Dorsolateral prefrontal cortex (tissue), 120 donors: ENCODE measurements at regions of chr6 and their contacts with region 1.

Region 1: DNA sequence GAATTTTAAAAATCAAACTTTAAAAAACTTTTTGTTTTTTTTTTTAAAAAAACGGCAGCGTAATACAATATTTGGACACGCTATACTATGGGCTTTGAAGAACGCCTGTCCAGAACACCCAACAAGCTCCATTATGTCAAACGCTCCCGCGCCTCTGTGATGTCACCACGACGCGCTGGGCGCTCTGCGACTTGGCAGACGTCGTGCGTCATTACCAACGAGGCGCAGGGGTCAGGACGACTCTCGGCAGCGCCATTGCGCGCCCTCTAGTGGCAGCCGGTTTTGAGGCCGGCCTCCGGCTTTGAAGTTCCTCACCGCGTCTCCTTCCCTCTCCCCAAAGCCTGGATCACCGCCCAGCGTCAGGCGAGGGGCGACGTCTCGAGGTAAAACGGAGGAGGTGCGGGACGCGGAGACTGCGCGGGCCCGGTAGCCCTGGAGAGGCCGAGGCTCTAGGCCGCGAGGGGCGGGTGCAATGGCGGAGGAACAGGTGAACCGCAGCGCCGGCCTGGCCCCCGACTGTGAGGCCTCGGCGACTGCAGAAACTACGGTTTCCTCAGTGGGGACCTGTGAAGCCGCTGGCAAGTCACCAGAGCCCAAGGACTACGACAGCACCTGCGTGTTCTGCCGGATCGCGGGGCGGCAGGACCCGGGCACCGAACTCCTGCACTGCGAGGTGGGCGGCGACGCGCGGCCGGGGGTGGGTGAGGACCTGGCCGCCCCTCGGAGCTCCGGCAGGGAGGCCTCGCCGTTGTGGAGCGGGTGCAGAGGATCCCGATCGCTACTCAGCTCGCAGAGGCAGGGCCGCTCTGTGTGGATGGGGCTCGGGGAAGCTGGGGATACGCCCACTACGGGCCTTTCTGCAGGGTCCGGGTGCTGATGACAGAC is at the start of gene HINT3:
- DNase-seq: peak; percentile 96 to 98 (median 98)
- H3K4me3 ChIP-seq: peak within 1 kb of the TSS; percentile 67 to 100 (median 95)
- H3K27ac ChIP-seq: peak within 1 kb of the TSS; percentile 93 to 100 (median 99)
- H3K27me3 ChIP-seq: no peaks in the 10 kb centered on the region
- CTCF ChIP-seq: peak; percentile 94 to 100 (median 98)
- total RNA-seq, gene HINT3: 33.6 to 54.2 (median 42.3) TPM

Region 2: GRCh38 chr6:125858427-125859320 is 98.1 kb before region 1 on chr6:
- intact Hi-C with region 1: loop called in 1 of 2 experiments (anchors 5 kb)
- DNase-seq: peak in 8 of 10 donors; percentile 45 to 74 (median 56)
- H3K4me3 ChIP-seq: no peak overlapping the region
- H3K27ac ChIP-seq: peak overlapping the region in 55 of 59 donors; percentile 4 to 99 (median 73)
- H3K27me3 ChIP-seq: no peaks in the 10 kb centered on the region
- CTCF ChIP-seq: peak; percentile 40 to 88 (median 71)

Region 3: GRCh38 chr6:125867483-125867935 is 89.2 kb before region 1 on chr6:
- intact Hi-C with region 1: loop called (anchors 5 kb)
- DNase-seq: no peak
- H3K4me3 ChIP-seq: no peak overlapping the region
- H3K27ac ChIP-seq: peak overlapping the region; percentile 73 to 99 (median 94)
- H3K27me3 ChIP-seq: no peaks in the 10 kb centered on the region
- CTCF ChIP-seq: no peak

Region 4: DNA sequence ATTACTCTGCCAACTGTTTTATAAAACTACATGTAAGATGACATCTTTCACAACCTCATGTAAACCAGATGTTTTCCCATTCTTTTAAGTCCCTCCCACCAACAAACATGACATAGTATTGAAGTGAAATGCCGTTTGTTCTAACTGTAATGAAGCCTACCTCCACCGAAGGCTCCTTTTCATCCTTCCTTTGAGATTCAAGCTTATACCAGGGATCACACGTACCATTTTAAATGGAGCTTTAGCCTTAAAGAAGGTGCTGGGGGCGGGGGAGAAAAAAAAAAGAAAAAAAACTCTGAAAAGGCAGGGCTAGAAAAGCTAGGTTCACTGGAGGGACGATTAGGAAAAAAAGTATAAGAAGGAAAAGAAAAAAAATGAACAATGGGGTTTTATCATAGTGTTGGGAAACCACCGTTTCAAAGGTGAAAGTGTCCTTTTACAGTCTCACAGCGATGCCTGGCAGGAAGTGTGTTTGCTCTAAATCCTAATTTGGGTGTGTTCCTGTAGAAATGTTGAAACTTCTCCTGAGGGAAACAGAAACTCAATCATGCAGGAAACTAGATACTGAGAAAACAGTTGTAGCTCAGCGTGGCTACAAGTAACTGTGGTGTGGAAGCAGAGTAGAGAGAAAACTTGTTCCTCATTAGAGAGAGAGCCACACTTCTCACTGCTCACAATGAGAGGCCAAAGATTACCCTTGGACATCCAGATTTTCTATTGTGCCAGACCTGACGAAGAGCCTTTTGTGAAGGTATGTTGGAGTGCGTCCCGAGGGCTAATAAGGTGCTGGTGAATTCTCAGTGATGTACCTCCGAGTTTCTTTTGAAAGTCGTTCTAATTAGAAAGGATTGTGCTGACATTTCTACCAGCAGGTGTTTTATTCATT is 37.8 kb before region 1 on chr6:
- intact Hi-C with region 1: loop called in 1 of 2 experiments (anchors 5 kb)
- DNase-seq: no peak
- H3K4me3 ChIP-seq: peak overlapping the region in 44 of 59 donors; percentile 2 to 51 (median 26)
- H3K27ac ChIP-seq: peak overlapping the region in 58 of 59 donors; percentile 0 to 87 (median 67)
- H3K27me3 ChIP-seq: no peaks in the 10 kb centered on the region
- CTCF ChIP-seq: no peak